ENCODE measurements at regions of chr7 and their contacts with region 1.

Region 1: GRCh38 chr7:5620459-5620881 is 161.0 kb downstream of the RNF216 start:
- DNase-seq: no peak
- H3K4me3 ChIP-seq: no peak overlapping the region
- H3K27ac ChIP-seq: no peak overlapping the region
- H3K4me1 ChIP-seq: peaks cover 0 to 4% (median under 1%) of the 10 kb centered on the region in 4 experiments; a peak in 2 of 7 replicates
- H3K27me3 ChIP-seq: no peaks in the 10 kb centered on the region
- CTCF ChIP-seq: no peak
- EP300 ChIP-seq: no peak
- POLR2A ChIP-seq: no peak
- RAD21 ChIP-seq: no peak

Region 2: GRCh38 chr7:5500056-5500776 is 120.3 kb before region 1 on chr7:
- CTCF ChIA-PET with region 1: no interaction called
- POLR2A ChIA-PET with region 1: no interaction called
- DNase-seq: no peak
- H3K4me3 ChIP-seq: no peak overlapping the region
- H3K27ac ChIP-seq: no peak overlapping the region
- H3K4me1 ChIP-seq: no peaks in the 10 kb centered on the region; a peak in 2 of 7 replicates
- H3K27me3 ChIP-seq: no peaks in the 10 kb centered on the region
- CTCF ChIP-seq: no peak
- EP300 ChIP-seq: no peak
- POLR2A ChIP-seq: no peak
- RAD21 ChIP-seq: no peak

Region 3: GRCh38 chr7:5526100-5526905 is 94.2 kb before region 1 on chr7:
- CTCF ChIA-PET with region 1: no interaction called
- POLR2A ChIA-PET with region 1: interaction called, 15 read pairs
- DNase-seq: peak in 1 of 2 experiments; percentile 76
- H3K4me3 ChIP-seq: peak overlapping the region in 1 of 4 experiments; percentile 90; a peak in 2 of 8 replicates
- H3K27ac ChIP-seq: peak overlapping the region; percentile 24; the same call in 1 of the 2 replicates
- H3K4me1 ChIP-seq: peaks cover 0 to 21% (median 12%) of the 10 kb centered on the region in 4 experiments; a peak in 6 of 7 replicates
- H3K27me3 ChIP-seq: no peaks in the 10 kb centered on the region
- CTCF ChIP-seq: peak in 1 of 3 experiments; percentile 8; a peak in 1 of 4 replicates
- EP300 ChIP-seq: no peak
- POLR2A ChIP-seq: peak in 1 of 2 experiments; percentile 72; a peak in 2 of 3 replicates
- RAD21 ChIP-seq: peak; percentile 17 to 26; a peak in 2 of 4 replicates

Region 4: GRCh38 chr7:5582532-5582935 is 37.9 kb before region 1 on chr7:
- CTCF ChIA-PET with region 1: no interaction called
- POLR2A ChIA-PET with region 1: no interaction called
- DNase-seq: no peak
- H3K4me3 ChIP-seq: no peak overlapping the region
- H3K27ac ChIP-seq: no peak overlapping the region
- H3K4me1 ChIP-seq: no peaks in the 10 kb centered on the region; a peak in 1 of 7 replicates
- H3K27me3 ChIP-seq: no peaks in the 10 kb centered on the region
- CTCF ChIP-seq: no peak
- EP300 ChIP-seq: no peak
- POLR2A ChIP-seq: no peak
- RAD21 ChIP-seq: no peak

Region 5: DNA sequence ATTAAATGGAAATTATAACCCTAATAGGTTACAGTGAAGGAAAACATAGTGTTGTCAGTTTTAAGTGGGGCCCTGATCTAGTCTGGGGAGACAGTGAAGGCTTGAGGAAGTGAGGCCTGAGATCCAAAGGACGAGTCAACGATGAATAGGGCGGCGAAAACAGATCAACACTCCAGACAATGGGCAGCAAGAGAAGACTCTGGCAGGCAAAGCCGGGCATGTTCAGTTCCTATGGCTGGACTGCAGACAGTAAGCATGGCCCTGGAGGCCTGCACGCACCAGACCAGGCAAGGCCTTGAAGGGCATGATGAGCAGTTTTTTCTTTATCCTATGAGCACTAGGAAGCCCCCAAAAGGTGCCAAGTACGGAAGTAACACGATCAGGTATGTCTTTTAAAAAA is 33.2 kb after region 1 on chr7:
- CTCF ChIA-PET with region 1: no interaction called
- POLR2A ChIA-PET with region 1: no interaction called
- DNase-seq: no peak
- H3K4me3 ChIP-seq: no peak overlapping the region
- H3K27ac ChIP-seq: no peak overlapping the region
- H3K4me1 ChIP-seq: peaks cover 0 to 8% (median 0%) of the 10 kb centered on the region in 4 experiments; a peak in 2 of 7 replicates
- H3K27me3 ChIP-seq: no peaks in the 10 kb centered on the region
- CTCF ChIP-seq: no peak
- EP300 ChIP-seq: no peak
- POLR2A ChIP-seq: no peak
- RAD21 ChIP-seq: no peak

Measured in H1 (cell line).